ENCODE measurements at regions of chr3 and their contacts with region 1.

Region 1: GRCh38 chr3:47731061-47731460 is 50.6 kb downstream of the SMARCC1 start:
- DNase-seq: no peak

Region 2: GRCh38 chr3:47705391-47705790 is 25.7 kb before region 1 on chr3:
- intact Hi-C with region 1: loop called in 1 of 2 experiments (anchors 1 kb)
- DNase-seq: no peak

Region 3: GRCh38 chr3:48556793-48557626 is 825.9 kb after region 1 on chr3 and contains the start of gene PFKFB4:
- intact Hi-C with region 1: no loop called
- DNase-seq: peak; percentile 100
- total RNA-seq, gene PFKFB4: 2.0 to 4.5 TPM

Measured in posterior vena cava (tissue), 2 donors.